ENCODE measurements at regions of chr6 and their contacts with region 1.

Region 1: GRCh38 chr6:87393022-87393622 is 14.7 kb upstream of the CFAP206 start:
- DNase-seq: peak in 20 of 35 experiments; percentile 1 to 81 (median 22)
- ATAC-seq: peak; percentile 82 to 87 (median 85)
- H3K4me3 ChIP-seq: no peak overlapping the region
- H3K4me3 Mint-ChIP-seq: no peak overlapping the region
- H3K27ac ChIP-seq: no peak overlapping the region
- H3K27ac Mint-ChIP-seq: no peak overlapping the region
- H3K4me1 ChIP-seq: no peaks in the 10 kb centered on the region
- H3K4me1 Mint-ChIP-seq: peaks cover 0 to 2% (median 1%) of the 10 kb centered on the region in 3 donors
- H3K27me3 ChIP-seq: no peaks in the 10 kb centered on the region
- H3K27me3 Mint-ChIP-seq: no peaks in the 10 kb centered on the region

Region 2: GRCh38 chr6:87174078-87174579 is 219.0 kb before region 1 on chr6:
- CTCF ChIA-PET with region 1: no interaction called
- POLR2A ChIA-PET with region 1: no interaction called
- DNase-seq: peak in 1 of 35 experiments; percentile 21
- ATAC-seq: peak in 2 of 4 experiments; percentile 69 to 75
- H3K4me3 ChIP-seq: no peak overlapping the region
- H3K4me3 Mint-ChIP-seq: peak overlapping the region in 1 of 3 donors; percentile 34
- H3K27ac ChIP-seq: no peak overlapping the region
- H3K27ac Mint-ChIP-seq: peak overlapping the region; percentile 9 to 11
- H3K4me1 ChIP-seq: peaks cover 17 to 30% of the 10 kb centered on the region in 2 experiments
- H3K4me1 Mint-ChIP-seq: peaks cover 86 to 90% (median 87%) of the 10 kb centered on the region in 3 donors
- H3K27me3 ChIP-seq: no peaks in the 10 kb centered on the region
- H3K27me3 Mint-ChIP-seq: no peaks in the 10 kb centered on the region

Region 3: DNA sequence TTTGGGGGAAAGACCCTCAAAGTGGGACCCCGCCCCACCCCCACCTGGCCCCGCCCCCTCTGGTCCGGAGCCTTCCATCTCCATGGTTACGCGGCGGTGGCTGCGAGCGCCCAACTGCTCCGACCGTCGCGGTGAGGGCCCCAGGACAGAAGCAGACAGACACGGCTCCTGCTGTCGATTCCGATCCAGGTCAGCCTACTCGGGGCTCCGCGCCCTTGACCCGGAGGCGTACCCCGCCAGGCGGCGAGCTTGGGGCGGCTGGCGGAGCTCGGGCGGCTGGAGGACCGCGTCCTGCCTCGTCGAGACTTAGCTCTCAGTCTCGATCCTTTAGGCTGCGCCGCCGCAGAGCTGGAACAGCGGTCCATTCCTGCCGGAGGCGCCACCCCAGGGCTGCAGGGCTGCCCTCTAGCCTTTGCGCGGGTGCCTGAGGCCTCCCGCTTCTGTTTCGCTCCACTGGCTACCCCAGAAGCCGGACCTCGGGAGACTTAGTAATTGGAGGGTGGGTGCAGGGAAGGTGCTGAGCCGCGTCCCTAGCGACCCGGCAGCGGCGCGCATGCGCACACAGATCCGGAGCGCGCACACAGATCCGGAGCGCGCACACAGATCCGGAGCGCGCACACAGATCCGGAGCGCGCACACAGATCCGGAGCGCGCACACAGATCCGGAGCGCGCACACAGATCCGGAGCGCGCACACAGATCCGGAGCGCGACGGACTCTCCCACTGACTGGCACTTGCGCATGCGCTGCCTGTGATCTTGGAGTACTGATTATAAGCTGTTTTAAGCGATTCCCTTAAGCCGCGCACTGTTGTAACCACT is 15.0 kb after region 1 on chr6 and contains the start of gene CFAP206:
- CTCF ChIA-PET with region 1: interaction called, 4 to 10 read pairs
- POLR2A ChIA-PET with region 1: no interaction called
- DNase-seq: peak; percentile 61 to 90 (median 73)
- ATAC-seq: peak; percentile 83 to 88 (median 86)
- H3K4me3 ChIP-seq: peak within 1 kb of the TSS; percentile 89 to 92
- H3K4me3 Mint-ChIP-seq: peak within 1 kb of the TSS; percentile 83 to 86 (median 83)
- H3K27ac ChIP-seq: peak within 1 kb of the TSS; percentile 40
- H3K27ac Mint-ChIP-seq: peak within 1 kb of the TSS; percentile 65 to 85
- H3K4me1 ChIP-seq: peaks cover 5 to 6% of the 10 kb centered on the region in 2 experiments
- H3K4me1 Mint-ChIP-seq: peaks cover 5 to 7% (median 6%) of the 10 kb centered on the region in 3 donors
- H3K27me3 ChIP-seq: peaks cover 4 to 10% of the 10 kb centered on the region in 2 experiments
- H3K27me3 Mint-ChIP-seq: peaks cover 10% of the 10 kb centered on the region in 2 donors
- total RNA-seq, gene CFAP206: 0.35 TPM in 1 of 5 donors, not detected in the others